ENCODE measurements at regions of chr5 and their contacts with region 1.

Region 1: GRCh38 chr5:173972925-173973615 is 15.9 kb upstream of the C5orf47 start:
- DNase-seq: peak; percentile 92

Region 2: DNA sequence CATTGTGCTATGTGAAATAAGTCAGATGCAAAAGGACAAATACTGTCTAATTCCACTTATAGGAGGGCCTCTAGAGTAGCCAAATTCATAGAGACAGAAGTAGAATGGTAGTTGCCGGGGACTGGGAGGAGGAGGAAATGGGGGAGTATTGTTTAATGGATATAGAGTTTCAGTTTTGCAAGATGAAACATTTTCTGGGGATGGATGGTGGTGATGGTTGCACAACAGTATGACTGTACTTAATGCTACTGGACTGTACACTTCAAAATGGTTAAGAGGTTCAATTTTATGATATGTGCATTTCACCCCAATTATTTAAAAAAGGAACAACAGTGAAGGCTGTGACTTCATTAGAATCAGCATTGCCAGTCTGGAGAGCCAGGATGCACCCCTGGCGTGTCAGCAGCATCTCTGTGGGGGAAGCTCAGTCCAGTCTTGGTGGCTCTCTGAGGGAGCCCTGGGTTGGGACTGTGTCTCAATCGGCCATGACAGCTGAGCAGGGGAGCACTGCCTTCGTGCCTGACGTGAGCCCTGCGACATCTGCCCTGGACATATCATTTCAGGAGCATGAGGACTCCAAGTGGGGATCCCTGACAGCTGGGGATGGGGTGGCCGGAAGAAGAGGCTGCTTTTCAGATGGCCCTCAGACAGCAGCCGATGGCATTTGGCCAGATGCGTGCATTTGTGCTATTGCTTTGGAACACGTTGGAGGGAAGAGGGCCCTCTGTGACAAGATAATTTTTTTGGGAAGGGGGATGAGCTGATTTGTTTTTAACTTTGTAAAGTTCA is 514.1 kb before region 1 on chr5:
- intact Hi-C with region 1: no loop called
- DNase-seq: no peak

Region 3: GRCh38 chr5:173615884-173616576 is 357.0 kb before region 1 on chr5:
- intact Hi-C with region 1: loop called (anchors 2 to 5 kb)
- DNase-seq: peak; percentile 88

Region 4: GRCh38 chr5:173623296-173623771 is 349.7 kb before region 1 on chr5:
- intact Hi-C with region 1: loop called (anchors 2 to 5 kb)
- DNase-seq: no peak

Region 5: GRCh38 chr5:173707392-173707791 is 265.7 kb before region 1 on chr5:
- intact Hi-C with region 1: loop called in 1 of 2 experiments (anchors 10 kb)
- DNase-seq: peak; percentile 86

Region 6: GRCh38 chr5:173887610-173888472 is 85.2 kb before region 1 on chr5 and contains the start of gene CPEB4:
- intact Hi-C with region 1: loop called in 1 of 2 experiments (anchors 5 kb)
- DNase-seq: peak; percentile 100
- total RNA-seq, gene CPEB4: 51.9 to 102 TPM

Region 7: DNA sequence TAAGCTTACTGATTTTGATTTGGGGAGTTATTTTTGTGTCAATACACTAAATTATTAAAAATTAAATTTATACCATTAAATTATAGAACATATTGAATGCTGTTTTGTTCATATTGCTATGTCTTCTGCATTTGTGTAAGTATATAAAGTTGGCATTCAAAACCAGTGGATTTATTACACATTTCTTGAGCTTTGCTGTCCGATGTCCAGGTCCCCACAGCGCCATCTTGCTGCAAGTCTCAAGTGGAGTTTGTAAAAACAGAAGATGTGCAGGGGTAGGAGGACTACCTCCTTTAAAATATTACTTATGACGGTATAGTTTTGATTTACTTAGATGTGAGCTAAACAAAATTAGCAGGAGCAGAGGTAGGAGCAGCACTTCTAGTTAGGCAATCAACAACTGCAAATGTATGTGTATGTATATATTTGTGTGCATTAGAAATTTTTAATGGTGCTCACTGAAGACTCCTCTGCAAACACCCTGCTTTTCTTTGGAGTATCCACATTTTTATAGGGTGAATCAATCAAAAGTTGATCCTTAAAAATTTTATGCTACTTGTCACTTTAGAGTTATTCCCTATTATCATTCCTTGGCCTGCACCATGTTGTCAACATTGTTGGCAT is 47.5 kb before region 1 on chr5:
- intact Hi-C with region 1: no loop called
- DNase-seq: no peak